MCF 10A (cell line): ENCODE measurements at regions of chr7 and their contacts with region 1.

Region 1: DNA sequence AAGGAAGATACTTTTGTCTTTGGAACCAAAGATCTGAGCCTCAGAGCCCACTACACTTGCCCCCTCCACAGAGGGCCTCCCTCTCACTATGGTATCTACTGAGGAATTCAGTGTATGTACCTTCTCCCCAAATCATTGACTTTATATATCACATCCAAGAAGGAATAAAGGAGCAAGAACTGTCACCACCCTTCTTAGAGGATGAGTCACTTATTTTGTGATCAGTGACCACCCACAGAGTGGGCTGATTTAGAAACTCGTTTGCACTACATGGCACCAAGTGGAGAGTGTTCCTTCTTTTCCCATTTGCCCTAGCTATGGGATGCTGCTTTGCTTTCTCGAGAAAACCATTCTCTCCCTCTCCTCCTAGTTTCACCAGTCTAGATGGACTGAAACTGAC is 5.7 kb downstream of the TMEM243 start:
- DNase-seq: no peak
- H3K4me3 Mint-ChIP-seq: no peak overlapping the region
- H3K27ac Mint-ChIP-seq: no peak overlapping the region
- H3K4me1 Mint-ChIP-seq: peaks cover 32% of the 10 kb centered on the region
- H3K27me3 Mint-ChIP-seq: no peaks in the 10 kb centered on the region
- CTCF ChIP-seq: no peak

Region 2: DNA sequence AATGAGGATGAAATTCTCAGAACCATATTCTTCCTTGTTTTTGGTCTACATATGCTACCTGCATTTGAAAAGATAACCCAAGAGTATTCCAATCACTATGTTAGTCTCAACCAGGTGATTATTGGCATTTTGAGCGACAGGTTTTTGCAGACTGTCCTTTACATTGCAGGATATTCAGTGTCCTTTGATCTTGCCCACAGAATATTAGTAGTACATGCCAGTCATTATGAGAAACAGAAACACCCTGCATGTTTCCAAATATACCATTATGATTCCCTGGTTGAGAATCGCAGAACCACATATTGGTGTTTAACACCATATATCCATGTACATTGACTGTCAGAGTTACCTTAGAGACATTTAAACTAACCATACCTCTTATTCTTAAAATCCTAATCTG is 24.9 kb before region 1 on chr7:
- CTCF ChIA-PET with region 1: interaction called, 7 read pairs
- POLR2A ChIA-PET with region 1: interaction called, 5 read pairs
- intact Hi-C with region 1: loop called (anchors 2 kb)
- DNase-seq: no peak
- H3K4me3 Mint-ChIP-seq: no peak overlapping the region
- H3K27ac Mint-ChIP-seq: no peak overlapping the region
- H3K4me1 Mint-ChIP-seq: no peaks in the 10 kb centered on the region
- H3K27me3 Mint-ChIP-seq: no peaks in the 10 kb centered on the region
- CTCF ChIP-seq: no peak

Region 3: GRCh38 chr7:87199700-87200450 is 13.9 kb before region 1 on chr7:
- CTCF ChIA-PET with region 1: no interaction called
- POLR2A ChIA-PET with region 1: interaction called, 15 read pairs
- intact Hi-C with region 1: loop called (anchors 2 kb)
- DNase-seq: no peak
- H3K4me3 Mint-ChIP-seq: no peak overlapping the region
- H3K27ac Mint-ChIP-seq: no peak overlapping the region
- H3K4me1 Mint-ChIP-seq: no peaks in the 10 kb centered on the region
- H3K27me3 Mint-ChIP-seq: no peaks in the 10 kb centered on the region
- CTCF ChIP-seq: no peak